ENCODE measurements at regions of chr15 and their contacts with region 1.

Region 1: DNA sequence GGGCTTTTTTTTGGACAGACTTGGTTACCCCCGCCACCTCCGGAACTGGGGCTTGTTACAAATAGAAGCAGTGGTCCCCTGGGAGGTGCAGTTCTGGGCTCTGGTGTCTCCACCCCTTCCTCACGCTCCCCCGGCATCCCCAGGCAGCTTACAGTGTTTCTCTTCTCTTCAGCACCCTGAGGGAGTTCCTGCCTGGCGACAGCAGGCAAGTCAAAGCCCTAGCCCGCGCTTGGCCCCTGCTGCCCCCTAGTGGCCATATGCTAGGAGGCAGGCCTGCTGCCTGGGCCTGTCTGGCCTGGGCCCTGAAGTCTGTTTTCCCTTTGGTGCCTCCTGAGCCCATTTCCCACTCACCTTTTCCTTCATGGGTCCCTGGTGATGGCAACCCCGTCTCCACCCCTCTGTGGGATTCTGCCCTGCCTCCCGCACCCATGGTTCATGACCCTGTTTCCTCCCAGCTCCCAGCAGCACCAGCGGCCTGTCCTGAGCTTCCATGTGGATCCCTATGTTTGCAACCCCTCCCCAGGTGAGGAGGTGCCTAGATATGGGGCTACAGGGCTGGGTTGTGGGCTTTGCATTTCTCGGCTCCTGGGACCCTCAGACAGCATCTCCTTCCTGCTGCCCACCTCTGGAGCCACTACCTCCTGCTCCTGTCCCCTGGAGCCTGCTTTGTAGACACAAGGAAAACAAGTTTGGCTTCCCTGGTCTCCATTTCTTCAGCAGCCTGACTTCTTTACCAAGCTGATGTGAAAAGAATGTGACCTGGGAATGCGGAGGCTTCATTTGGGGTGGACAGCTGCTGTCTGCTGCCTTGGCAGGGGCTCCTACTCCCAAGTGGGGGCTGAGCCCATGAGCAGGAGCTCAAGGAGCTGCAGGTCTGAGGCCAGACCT is 2.2 kb downstream of the SNX22 start:
- DNase-seq: peak; percentile 84 to 89 (median 86)
- H3K4me3 ChIP-seq: no peak overlapping the region
- H3K4me3 Mint-ChIP-seq: peak overlapping the region; percentile 72 to 92 (median 80)
- H3K27ac ChIP-seq: peak overlapping the region; percentile 11
- H3K27ac Mint-ChIP-seq: peak overlapping the region in 6 of 7 donors; percentile 18 to 87 (median 76)
- H3K4me1 ChIP-seq: peaks cover 41% of the 10 kb centered on the region
- H3K4me1 Mint-ChIP-seq: peaks cover 19 to 51% (median 32%) of the 10 kb centered on the region in 4 donors
- H3K27me3 ChIP-seq: peaks cover 6% of the 10 kb centered on the region
- H3K27me3 Mint-ChIP-seq: peaks cover 5 to 8% of the 10 kb centered on the region in 2 donors

Region 2: DNA sequence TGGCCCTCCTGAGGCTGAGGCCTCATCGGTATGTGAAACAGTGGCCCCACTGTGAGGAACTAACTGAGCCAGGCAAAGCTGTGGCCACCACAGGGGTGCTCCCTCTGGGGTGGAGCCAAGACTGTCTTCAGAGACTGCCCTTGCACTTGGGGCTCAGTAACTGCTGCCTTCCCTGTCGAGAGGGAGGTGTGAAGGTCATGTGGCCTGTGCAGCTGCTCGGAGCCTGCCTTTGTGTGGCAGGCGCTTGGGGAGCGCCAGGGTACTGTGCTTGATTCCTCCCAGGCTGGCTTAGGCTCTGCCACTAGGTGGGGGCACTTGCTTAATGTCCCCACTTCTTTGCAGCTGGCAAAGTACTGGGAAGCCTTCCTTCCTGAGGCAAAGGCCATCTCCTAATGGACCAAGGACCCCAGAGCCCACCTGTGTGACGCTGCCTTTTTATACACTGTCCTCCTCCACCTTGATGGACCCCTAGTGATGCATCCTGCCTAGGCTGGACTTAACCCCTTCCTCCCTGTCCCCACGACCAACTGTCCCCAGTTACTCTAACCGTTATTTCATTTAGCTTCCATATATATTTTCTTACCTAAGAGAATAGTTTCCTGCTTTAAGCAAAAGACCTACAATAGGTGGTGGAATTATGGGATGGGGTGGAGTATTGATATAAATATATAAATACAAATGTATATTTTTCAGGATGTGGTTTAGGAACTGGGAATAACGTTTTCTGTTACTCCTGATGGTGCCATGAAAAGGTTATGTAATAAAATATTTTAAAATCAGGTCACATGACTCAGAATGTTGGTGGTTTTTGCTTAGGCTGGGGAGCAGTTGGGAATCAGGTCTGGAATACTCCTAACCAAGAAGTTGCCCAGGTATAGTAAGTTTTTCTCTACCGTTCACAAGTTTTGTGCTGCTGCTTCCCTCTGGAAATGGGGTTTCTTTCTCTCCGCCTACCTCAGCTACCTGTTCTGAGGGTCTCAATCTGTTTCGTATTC is 16.2 kb before region 1 on chr15:
- CTCF ChIA-PET with region 1: interaction called, 28 read pairs
- POLR2A ChIA-PET with region 1: interaction called, 3 read pairs
- intact Hi-C with region 1: loop called (anchors 2 kb)
- DNase-seq: no peak
- H3K4me3 ChIP-seq: no peak overlapping the region
- H3K4me3 Mint-ChIP-seq: no peak overlapping the region
- H3K27ac ChIP-seq: no peak overlapping the region
- H3K27ac Mint-ChIP-seq: peak overlapping the region in 3 of 7 donors; percentile 13 to 37 (median 17)
- H3K4me1 ChIP-seq: no peaks in the 10 kb centered on the region
- H3K4me1 Mint-ChIP-seq: peaks cover 0 to 1% (median 0%) of the 10 kb centered on the region in 4 donors
- H3K27me3 ChIP-seq: no peaks in the 10 kb centered on the region
- H3K27me3 Mint-ChIP-seq: no peaks in the 10 kb centered on the region

Region 3: DNA sequence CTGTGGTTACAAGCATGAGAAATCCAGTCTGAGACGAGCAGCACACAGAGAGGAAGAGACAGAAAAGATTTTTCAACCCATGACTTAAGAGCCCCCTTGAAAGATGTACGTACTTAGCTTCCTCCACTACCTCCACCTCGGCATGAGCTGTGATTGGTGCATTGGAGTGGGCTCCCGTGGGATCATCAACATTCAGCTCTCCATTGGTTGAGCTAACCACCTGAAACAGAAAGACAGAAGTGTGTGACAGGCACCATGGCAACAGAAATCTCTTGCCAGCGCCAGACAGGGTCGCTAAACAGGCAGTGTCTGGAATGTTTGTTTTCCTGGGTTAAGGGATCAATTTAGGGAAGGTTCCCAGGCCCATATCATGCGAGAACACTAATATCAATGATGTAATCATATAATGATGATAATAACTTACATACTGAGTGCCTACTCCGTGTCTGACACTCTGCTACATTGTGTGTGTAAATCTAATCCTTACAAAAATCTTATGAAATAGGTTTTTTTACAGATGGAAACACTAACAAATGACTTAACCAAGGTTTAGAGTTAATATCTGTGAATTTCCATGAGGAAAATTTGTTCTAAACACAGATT is 26.6 kb after region 1 on chr15:
- CTCF ChIA-PET with region 1: interaction called, 12 read pairs
- POLR2A ChIA-PET with region 1: no interaction called
- intact Hi-C with region 1: no loop called
- DNase-seq: no peak
- H3K4me3 ChIP-seq: no peak overlapping the region
- H3K4me3 Mint-ChIP-seq: no peak overlapping the region
- H3K27ac ChIP-seq: no peak overlapping the region
- H3K27ac Mint-ChIP-seq: no peak overlapping the region
- H3K4me1 ChIP-seq: no peaks in the 10 kb centered on the region
- H3K4me1 Mint-ChIP-seq: no peaks in the 10 kb centered on the region
- H3K27me3 ChIP-seq: no peaks in the 10 kb centered on the region
- H3K27me3 Mint-ChIP-seq: no peaks in the 10 kb centered on the region

Measured in CD4-positive, alpha-beta memory T cell (primary cell).